T-cell (primary cell): ENCODE measurements at regions of chr16 and their contacts with region 1.

Region 1: GRCh38 chr16:68289621-68290329 is 21.0 kb downstream of the SLC7A6OS start:
- DNase-seq: peak in 19 of 35 experiments; percentile 22 to 57 (median 35)
- ATAC-seq: peak; percentile 41 to 51 (median 44)
- H3K4me3 ChIP-seq: no peak overlapping the region
- H3K4me3 Mint-ChIP-seq: peak overlapping the region; percentile 32 to 69 (median 42)
- H3K27ac ChIP-seq: peak overlapping the region; percentile 80
- H3K27ac Mint-ChIP-seq: peak overlapping the region; percentile 94
- H3K4me1 ChIP-seq: peaks cover 72 to 87% of the 10 kb centered on the region in 2 experiments
- H3K4me1 Mint-ChIP-seq: peaks cover 87 to 96% (median 89%) of the 10 kb centered on the region in 3 donors
- H3K27me3 ChIP-seq: no peaks in the 10 kb centered on the region
- H3K27me3 Mint-ChIP-seq: no peaks in the 10 kb centered on the region

Region 2: GRCh38 chr16:67750466-67750865 is 539.3 kb before region 1 on chr16:
- CTCF ChIA-PET with region 1: no interaction called
- POLR2A ChIA-PET with region 1: interaction called in 1 of 2 experiments, 10 read pairs
- DNase-seq: no peak
- ATAC-seq: no peak
- H3K4me3 ChIP-seq: no peak overlapping the region
- H3K4me3 Mint-ChIP-seq: no peak overlapping the region
- H3K27ac ChIP-seq: no peak overlapping the region
- H3K27ac Mint-ChIP-seq: peak overlapping the region in 1 of 2 donors; percentile 65
- H3K4me1 ChIP-seq: no peaks in the 10 kb centered on the region
- H3K4me1 Mint-ChIP-seq: peaks cover 0 to 3% (median 0%) of the 10 kb centered on the region in 3 donors
- H3K27me3 ChIP-seq: no peaks in the 10 kb centered on the region
- H3K27me3 Mint-ChIP-seq: no peaks in the 10 kb centered on the region

Region 3: DNA sequence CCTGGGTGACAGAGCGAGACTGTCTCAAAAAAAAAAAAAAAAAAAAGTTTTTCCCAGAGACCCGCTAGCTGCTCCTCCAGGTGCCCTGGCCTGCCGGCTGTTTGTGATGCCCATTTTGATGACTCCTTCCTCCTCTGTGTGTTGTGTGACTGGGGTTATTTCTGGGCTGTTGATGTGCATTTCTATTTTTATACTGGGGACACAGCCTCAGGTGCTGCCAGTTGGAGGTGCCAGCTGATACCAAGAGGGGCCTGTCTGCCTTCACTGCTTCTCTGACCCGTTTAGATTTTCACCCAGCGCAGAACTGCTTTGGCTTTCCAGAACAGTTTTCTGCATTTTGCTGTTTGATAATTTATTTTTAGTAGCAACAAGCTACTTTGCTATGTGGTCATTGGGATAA is 37.9 kb before region 1 on chr16:
- CTCF ChIA-PET with region 1: no interaction called
- POLR2A ChIA-PET with region 1: no interaction called
- DNase-seq: no peak
- ATAC-seq: no peak
- H3K4me3 ChIP-seq: no peak overlapping the region
- H3K4me3 Mint-ChIP-seq: no peak overlapping the region
- H3K27ac ChIP-seq: no peak overlapping the region
- H3K27ac Mint-ChIP-seq: no peak overlapping the region
- H3K4me1 ChIP-seq: peaks cover 0 to 6% of the 10 kb centered on the region in 2 experiments
- H3K4me1 Mint-ChIP-seq: peaks cover 1 to 15% (median 2%) of the 10 kb centered on the region in 3 donors
- H3K27me3 ChIP-seq: no peaks in the 10 kb centered on the region
- H3K27me3 Mint-ChIP-seq: no peaks in the 10 kb centered on the region

Region 4: GRCh38 chr16:68264128-68265077 is 25.4 kb before region 1 on chr16 and contains the start of gene SLC7A6:
- CTCF ChIA-PET with region 1: interaction called, 14 to 58 read pairs
- POLR2A ChIA-PET with region 1: interaction called, 5 read pairs
- DNase-seq: peak; percentile 42 to 92 (median 73)
- ATAC-seq: peak; percentile 81 to 86 (median 82)
- H3K4me3 ChIP-seq: peak within 1 kb of the TSS; percentile 82 to 86
- H3K4me3 Mint-ChIP-seq: peak within 1 kb of the TSS; percentile 91 to 96 (median 95)
- H3K27ac ChIP-seq: peak within 1 kb of the TSS; percentile 90
- H3K27ac Mint-ChIP-seq: peak within 1 kb of the TSS; percentile 97
- H3K4me1 ChIP-seq: peaks cover 27 to 64% of the 10 kb centered on the region in 2 experiments
- H3K4me1 Mint-ChIP-seq: peaks cover 52 to 62% (median 55%) of the 10 kb centered on the region in 3 donors
- H3K27me3 ChIP-seq: no peaks in the 10 kb centered on the region
- H3K27me3 Mint-ChIP-seq: no peaks in the 10 kb centered on the region
- total RNA-seq, gene SLC7A6: 146 to 216 (median 185) TPM

Region 5: GRCh38 chr16:68275611-68276191 is 14.1 kb before region 1 on chr16:
- CTCF ChIA-PET with region 1: interaction called in 1 of 2 experiments, 8 read pairs
- POLR2A ChIA-PET with region 1: interaction called, 8 to 12 read pairs
- DNase-seq: peak; percentile 27 to 81 (median 49)
- ATAC-seq: peak; percentile 81 to 88 (median 88)
- H3K4me3 ChIP-seq: peak overlapping the region in 1 of 2 donors; percentile 0
- H3K4me3 Mint-ChIP-seq: peak overlapping the region; percentile 46 to 80 (median 55)
- H3K27ac ChIP-seq: peak overlapping the region; percentile 75
- H3K27ac Mint-ChIP-seq: peak overlapping the region; percentile 98 to 100
- H3K4me1 ChIP-seq: peaks cover 75 to 94% of the 10 kb centered on the region in 2 experiments
- H3K4me1 Mint-ChIP-seq: peaks cover 70 to 76% (median 72%) of the 10 kb centered on the region in 3 donors
- H3K27me3 ChIP-seq: no peaks in the 10 kb centered on the region
- H3K27me3 Mint-ChIP-seq: no peaks in the 10 kb centered on the region

Region 6: GRCh38 chr16:68319185-68319908 is 29.6 kb after region 1 on chr16:
- CTCF ChIA-PET with region 1: interaction called in 1 of 2 experiments, 3 read pairs
- POLR2A ChIA-PET with region 1: interaction called, 8 to 12 read pairs
- DNase-seq: no peak
- ATAC-seq: no peak
- H3K4me3 ChIP-seq: no peak overlapping the region
- H3K4me3 Mint-ChIP-seq: no peak overlapping the region
- H3K27ac ChIP-seq: no peak overlapping the region
- H3K27ac Mint-ChIP-seq: peak overlapping the region; percentile 17 to 26
- H3K4me1 ChIP-seq: peaks cover 0 to under 1% of the 10 kb centered on the region in 2 experiments
- H3K4me1 Mint-ChIP-seq: peaks cover 13 to 28% (median 25%) of the 10 kb centered on the region in 3 donors
- H3K27me3 ChIP-seq: no peaks in the 10 kb centered on the region
- H3K27me3 Mint-ChIP-seq: no peaks in the 10 kb centered on the region

Region 7: DNA sequence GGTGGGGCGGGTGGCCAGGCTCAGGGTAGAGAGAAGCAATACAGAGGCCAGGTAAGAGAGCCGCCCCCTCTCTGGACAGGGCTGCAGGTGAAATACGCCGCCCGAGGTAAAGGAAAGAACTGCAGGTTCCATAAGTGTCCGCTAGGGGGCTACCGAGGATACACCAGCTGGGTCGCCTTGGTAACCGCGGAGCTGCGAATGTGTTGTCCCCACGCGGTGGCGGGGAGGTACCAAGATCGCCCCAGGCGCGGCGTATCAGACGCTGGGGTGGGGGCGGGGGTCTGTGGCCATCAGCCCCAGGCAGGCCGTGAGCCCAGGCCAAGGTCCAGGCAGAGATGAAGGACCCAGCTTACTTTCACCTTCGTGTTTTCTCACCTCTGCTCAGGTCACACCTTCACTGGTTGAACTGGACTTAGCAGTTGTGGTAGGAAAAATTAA is 230.9 kb after region 1 on chr16:
- CTCF ChIA-PET with region 1: interaction called in 1 of 2 experiments, 10 read pairs
- POLR2A ChIA-PET with region 1: no interaction called
- DNase-seq: peak; percentile 64 to 92 (median 85)
- ATAC-seq: peak; percentile 96 to 97 (median 96)
- H3K4me3 ChIP-seq: peak overlapping the region; percentile 27 to 28
- H3K4me3 Mint-ChIP-seq: peak overlapping the region in 2 of 3 donors; percentile 51 to 66
- H3K27ac ChIP-seq: no peak overlapping the region
- H3K27ac Mint-ChIP-seq: no peak overlapping the region
- H3K4me1 ChIP-seq: peaks cover 0 to 10% of the 10 kb centered on the region in 2 experiments
- H3K4me1 Mint-ChIP-seq: peaks cover 7 to 10% (median 9%) of the 10 kb centered on the region in 3 donors
- H3K27me3 ChIP-seq: peaks cover 0 to 9% of the 10 kb centered on the region in 2 experiments
- H3K27me3 Mint-ChIP-seq: no peaks in the 10 kb centered on the region